AG04449 (cell line): ENCODE measurements at regions of chr3 and their contacts with region 1.

Region 1: DNA sequence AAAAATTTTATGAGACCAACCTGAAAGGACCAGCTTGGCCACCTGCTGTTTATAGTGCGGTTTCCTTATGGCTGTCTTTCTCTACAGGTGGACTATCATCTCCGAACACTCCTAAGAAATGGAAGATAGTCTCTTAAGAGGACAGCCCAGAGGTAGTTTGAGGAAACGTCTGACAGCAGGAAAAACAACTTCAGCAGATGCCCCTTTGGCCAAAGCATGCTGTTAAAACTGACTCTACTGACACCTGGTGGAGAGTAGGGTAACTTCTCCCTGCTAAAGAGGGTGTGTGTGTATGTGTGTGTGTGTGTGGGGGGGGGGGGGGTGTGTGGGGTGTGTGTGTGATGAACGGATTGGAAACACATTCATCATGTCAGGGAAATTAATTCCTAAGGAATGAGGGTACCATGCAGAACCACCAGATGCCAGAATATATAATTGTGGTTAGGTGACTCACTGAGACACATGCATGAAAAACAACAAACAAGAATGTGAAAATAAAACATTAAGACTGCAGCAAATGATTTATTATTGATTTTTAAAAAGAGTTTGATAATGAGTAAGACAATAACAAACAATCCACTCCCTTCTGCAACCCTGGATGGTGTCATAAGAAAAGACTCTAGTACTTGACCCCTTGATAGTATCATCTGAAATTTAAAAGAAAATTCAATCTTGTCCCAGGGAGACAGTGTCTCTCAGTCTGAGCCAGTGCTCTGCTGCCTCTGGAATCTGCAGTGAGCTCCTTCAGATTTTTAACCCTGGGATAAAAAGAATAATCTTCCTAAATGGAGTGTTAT is 256.5 kb downstream of the THRB start:
- DNase-seq: peak; percentile 89
- H3K4me3 ChIP-seq: no peak overlapping the region
- CTCF ChIP-seq: peak; percentile 79

Region 2: DNA sequence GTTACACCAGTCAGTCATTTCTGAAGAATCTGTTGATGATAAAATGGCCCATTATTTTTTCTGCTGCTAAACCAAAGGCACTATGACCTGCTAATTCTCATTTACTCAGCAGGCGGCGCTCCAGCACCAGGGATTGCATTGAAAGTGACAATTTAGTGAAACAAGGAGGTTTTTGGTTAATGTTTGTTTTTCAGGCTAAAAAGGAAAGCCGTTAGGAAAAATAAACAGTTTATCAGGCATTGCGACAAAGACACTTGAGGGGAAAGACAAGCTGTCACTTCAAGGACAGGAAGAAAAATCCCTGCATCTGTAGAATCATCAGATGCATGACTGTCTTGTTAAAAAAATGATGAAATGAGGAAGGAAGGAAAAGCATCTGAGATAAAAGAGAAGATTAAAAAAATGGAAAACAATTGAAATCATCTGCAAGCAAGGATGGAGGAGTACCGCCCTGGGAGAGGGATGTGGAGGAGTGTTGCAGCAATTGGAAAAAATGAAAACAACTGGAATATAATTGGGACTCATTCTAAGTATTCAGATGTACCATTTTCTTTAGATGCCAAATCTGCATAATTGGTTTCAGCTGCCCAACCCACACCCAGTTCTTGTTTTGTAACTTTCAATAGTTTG is 239.0 kb before region 1 on chr3:
- CTCF ChIA-PET with region 1: interaction called, 121 read pairs
- POLR2A ChIA-PET with region 1: no interaction called
- DNase-seq: no peak
- H3K4me3 ChIP-seq: no peak overlapping the region
- CTCF ChIP-seq: peak; percentile 83

Region 3: DNA sequence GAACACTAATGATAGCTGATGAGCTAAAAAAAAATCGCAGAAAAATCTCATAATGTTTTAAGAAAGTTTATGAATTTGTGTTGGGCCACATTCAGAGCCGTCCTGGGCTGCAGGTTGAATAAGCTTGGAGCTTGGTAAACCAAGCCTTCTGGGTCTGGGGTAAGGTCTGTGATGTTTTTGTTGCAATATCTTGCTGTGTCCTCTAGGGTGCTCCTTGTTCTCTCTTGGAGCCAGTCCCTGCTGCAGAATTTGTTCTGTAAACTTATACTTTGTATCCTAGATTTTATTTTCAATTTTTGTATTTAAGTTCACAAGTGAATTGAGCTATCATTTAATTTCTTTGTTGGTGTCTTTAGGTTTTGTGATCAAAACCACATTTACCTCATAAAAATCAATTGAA is 149.4 kb before region 1 on chr3:
- CTCF ChIA-PET with region 1: interaction called, 23 read pairs
- POLR2A ChIA-PET with region 1: no interaction called
- DNase-seq: no peak
- H3K4me3 ChIP-seq: no peak overlapping the region
- CTCF ChIP-seq: peak; percentile 50

Region 4: DNA sequence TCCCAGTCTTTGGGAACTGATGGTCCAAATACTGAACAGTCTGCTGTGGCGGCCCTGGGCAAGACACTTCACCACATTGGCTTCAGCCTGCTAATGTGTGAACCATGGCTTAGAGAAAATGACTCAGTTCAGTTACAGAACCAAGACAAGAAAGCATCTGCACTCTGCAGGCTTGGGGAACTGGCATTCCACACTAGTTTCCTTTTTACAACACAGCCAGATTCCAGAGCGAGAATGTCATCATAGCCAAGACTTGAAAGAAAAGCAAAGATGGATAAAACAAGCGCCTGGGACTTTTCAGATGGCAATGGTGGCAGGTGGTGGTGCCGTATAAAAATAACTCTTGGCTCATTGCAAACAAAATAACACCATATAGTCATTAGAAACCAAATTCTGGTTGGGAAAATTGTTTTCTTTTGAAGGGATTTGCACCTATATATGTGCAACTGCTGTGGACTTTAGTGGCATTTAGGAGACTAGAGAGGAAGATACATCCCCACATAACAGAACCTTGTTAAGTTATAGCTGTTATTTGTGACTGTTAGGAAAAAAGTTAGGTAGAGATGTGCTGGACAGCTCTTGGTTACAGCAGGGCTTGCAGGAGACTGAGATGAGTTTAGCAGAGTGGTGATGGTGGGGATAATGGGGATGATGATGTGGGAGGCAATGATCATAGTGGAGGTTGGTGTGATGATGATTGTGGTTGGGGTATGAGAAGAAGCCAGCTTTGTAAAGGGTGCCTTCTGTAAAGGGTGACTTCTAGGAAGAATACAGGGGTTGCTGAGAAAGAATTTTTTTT is 17.1 kb before region 1 on chr3:
- CTCF ChIA-PET with region 1: interaction called, 24 read pairs
- POLR2A ChIA-PET with region 1: no interaction called
- DNase-seq: peak; percentile 89
- H3K4me3 ChIP-seq: no peak overlapping the region
- CTCF ChIP-seq: no peak

Region 5: DNA sequence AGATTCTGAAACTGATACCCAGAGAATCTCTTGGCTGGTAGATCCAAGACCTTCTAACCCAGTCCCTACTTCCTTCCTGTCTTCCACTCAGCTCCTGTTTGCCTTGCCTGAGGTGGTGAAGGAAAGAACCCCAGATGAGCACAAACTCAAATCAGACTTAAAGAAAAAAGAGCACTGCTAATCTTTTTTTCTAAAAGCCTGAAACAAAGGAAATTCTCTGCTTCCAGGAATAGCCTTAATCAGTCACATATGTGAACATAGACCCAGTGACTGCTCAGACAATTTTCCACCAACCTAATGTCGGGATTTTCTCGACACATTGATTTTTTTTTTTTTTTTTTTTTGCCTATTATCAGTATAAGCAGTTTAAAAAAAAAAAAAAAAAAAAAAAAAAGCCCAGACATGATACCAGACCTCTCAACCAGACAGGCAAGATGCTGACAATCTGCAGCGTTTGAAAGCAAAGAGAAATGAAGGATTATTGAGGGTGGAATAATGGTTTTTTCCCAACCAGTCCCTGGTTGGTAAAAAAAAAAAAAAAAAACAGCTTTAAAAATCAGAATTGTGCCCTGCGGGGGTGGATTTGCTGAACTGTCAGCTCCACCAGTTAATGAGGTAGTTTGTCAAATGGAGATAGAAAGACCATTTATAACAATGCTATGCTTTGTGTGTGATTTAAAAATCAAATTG is 933.1 kb after region 1 on chr3:
- CTCF ChIA-PET with region 1: no interaction called
- POLR2A ChIA-PET with region 1: no interaction called
- DNase-seq: no peak
- H3K4me3 ChIP-seq: no peak overlapping the region
- CTCF ChIP-seq: no peak